ENCODE measurements at regions of chr19 and their contacts with region 1.

Region 1: DNA sequence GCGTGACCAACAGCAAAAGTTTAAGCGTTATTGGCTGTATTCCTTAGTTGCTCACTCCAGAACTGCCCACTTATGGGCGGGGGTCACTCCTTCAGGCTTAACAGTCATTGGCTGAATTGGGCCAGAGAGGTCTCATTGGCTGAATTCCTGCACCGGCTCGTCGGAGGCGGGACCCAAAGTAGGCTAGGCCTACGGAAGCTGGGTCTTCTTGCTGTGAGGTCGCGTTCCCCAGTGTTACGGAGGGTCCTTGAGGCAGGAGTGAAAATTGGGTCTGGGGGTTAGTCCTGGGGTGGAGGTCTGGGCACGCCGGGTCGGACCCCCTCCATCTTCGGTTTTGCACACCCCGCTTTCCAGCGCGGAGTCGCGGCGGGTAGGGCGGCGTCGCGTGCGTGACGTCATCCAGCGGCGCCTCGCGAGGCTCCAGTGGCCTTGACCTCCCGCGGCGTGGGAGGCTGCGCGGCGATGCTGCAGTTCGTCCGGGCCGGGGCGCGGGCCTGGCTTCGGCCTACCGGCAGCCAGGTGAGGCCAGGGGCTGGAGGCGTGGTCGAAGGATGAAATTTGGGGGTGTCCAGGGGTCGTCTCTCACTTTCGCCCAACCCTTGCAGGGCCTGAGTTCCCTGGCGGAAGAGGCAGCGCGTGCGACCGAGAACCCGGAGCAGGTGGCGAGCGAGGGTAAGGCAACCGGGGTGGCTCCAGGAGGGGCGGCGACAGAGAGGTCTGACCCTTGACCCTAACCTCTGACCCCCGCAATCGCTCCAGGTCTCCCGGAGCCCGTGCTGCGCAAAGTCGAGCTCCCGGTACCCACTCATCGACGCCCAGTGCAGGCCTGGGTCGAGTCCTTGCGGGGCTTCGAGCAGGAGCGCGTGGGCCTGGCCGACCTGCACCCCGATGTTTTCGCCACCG is at the start of gene MRPL4:
- DNase-seq: peak; percentile 93 to 99
- H3K4me3 ChIP-seq: peak within 1 kb of the TSS; percentile 68 to 94
- H3K27ac ChIP-seq: peak within 1 kb of the TSS; percentile 68 to 71
- H3K4me1 ChIP-seq: peaks cover 6 to 7% of the 10 kb centered on the region in 2 donors
- H3K27me3 ChIP-seq: no peaks in the 10 kb centered on the region
- CTCF ChIP-seq: no peak
- total RNA-seq, gene MRPL4: 72.9 TPM

Region 2: DNA sequence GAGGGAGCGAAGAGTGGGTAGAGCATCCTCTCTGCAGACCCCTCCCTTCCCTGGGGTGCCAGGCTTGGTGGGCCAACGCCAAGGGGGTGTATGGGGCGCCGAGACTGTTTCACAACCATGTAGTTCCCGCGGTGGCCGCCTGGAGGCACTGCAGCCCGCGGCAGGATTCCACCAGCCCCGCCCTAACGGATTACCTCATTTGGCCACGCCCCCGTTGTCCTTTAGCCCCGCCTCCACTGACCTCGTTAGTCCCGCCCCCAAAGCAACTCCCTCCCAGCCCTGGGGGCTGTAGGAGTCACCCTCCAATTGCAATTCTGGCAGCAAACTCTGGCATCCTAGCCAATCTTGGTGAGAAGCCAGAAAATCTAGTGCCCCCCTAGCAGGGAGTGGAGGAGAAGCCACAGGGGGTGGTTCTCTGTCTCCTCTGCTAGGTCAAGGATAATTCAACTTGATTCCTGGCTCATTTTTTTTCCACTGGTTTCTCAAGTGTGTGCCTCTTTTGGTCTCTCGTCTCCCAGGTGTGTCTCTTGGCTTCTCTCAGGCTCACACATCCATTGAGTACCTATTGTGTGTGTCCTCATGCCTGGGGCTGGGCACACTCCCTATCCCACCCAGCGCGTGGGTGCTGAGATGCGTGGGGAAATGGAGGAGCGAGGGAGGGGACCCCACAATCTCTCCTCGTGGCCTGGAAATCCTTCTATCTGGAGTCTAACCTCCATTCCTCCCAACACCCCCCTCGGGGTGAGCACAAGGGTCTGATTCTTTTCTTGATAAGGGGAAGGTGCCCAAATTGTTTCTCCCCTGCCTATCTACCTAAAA is 317.7 kb before region 1 on chr19:
- intact Hi-C with region 1: loop called (anchors 5 kb)
- DNase-seq: peak in 1 of 2 donors; percentile 77
- H3K4me3 ChIP-seq: no peak overlapping the region
- H3K27ac ChIP-seq: no peak overlapping the region
- H3K4me1 ChIP-seq: peaks cover 2 to 11% of the 10 kb centered on the region in 2 donors
- H3K27me3 ChIP-seq: peaks cover 9% of the 10 kb centered on the region
- CTCF ChIP-seq: peak; percentile 79 to 81 (median 79)

Region 3: DNA sequence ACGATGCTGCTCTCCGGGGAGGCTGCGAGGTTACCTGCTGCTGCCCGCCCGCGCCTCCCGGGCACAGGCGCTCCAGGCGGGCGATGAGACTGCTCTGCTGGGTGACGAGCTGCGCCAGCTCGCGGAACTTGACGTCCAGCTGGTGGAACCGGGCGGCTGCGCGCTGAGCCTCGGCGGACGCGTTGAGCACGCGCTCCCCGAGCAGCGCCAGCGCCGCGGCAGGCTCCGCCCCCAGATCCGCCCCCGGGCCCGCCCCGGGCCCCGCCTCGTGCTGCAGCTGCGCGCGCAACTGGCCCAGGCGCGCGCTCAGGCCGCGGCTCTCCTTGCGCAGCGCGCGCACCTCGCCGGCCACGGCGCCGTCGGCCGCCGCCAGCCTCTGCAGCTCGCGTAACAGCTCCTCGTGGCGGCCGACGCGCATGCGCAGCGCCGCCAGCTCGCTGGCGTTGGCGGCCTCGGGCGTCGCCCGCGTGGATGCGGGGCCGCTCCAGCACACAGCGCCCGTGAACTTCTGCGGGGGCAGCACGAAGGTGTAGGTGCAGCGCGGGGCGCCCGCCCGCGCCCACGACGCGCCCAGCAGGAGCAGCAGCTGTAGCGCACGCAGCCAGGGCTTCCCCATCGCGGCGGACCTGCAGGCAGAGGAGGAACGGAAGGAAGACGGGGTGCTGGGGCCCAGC is 156.0 kb before region 1 on chr19:
- intact Hi-C with region 1: loop called (anchors 5 kb)
- DNase-seq: peak; percentile 52 to 94
- H3K4me3 ChIP-seq: peak overlapping the region; percentile 55 to 73
- H3K27ac ChIP-seq: peak overlapping the region; percentile 67 to 69
- H3K4me1 ChIP-seq: peaks cover 4 to 8% of the 10 kb centered on the region in 2 donors
- H3K27me3 ChIP-seq: no peaks in the 10 kb centered on the region
- CTCF ChIP-seq: peak in 1 of 3 experiments; percentile 26

Region 4: DNA sequence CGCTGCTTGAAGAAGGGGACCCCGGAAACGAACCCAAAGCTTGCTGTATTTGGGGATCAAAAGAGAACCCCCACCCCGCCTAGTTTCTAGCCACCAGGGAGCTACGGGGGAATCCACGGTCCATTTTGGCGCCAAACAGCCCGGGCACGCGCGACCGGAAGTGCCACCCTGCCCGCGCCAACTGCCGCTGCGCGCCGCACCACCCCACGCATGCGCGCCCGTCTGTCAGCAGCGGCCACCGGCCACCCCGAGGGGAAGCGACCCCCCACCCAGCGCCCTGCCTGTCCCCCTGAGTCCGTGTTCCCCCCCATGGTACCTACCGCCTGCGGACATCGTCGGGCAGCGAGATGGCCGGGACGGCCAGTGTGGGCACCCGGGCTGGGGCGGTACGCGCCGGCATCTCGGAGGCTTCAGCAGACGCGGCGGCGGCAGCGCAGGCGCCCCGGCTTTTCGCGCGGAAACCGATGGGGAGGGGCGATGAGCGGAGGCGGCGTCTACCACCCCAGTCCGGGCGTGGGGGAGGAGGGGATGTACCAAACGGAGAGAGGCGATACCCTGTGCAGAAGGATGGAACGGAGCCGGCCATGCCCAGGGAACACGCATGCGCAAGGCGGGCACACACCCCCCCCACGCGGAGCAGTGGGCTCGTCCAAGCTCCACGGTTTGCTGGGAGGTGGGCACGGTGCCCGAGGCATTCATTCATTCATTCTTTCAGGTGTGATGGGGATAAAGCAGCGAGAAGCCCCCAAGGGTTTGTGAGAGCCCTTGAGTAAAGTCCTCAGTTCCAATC is 57.3 kb before region 1 on chr19 and contains the start of gene DNMT1:
- intact Hi-C with region 1: loop called (anchors 1 kb)
- DNase-seq: peak; percentile 75 to 96
- H3K4me3 ChIP-seq: peak within 1 kb of the TSS; percentile 81 to 97
- H3K27ac ChIP-seq: peak within 1 kb of the TSS; percentile 86 to 89
- H3K4me1 ChIP-seq: peaks cover 3 to 21% of the 10 kb centered on the region in 2 donors
- H3K27me3 ChIP-seq: no peaks in the 10 kb centered on the region
- CTCF ChIP-seq: no peak
- total RNA-seq, gene DNMT1: 54.0 TPM

Region 5: GRCh38 chr19:10305139-10305806 is 53.2 kb after region 1 on chr19:
- intact Hi-C with region 1: no loop called
- DNase-seq: no peak
- H3K4me3 ChIP-seq: no peak overlapping the region
- H3K27ac ChIP-seq: no peak overlapping the region
- H3K4me1 ChIP-seq: no peaks in the 10 kb centered on the region
- H3K27me3 ChIP-seq: no peaks in the 10 kb centered on the region
- CTCF ChIP-seq: no peak

Region 6: DNA sequence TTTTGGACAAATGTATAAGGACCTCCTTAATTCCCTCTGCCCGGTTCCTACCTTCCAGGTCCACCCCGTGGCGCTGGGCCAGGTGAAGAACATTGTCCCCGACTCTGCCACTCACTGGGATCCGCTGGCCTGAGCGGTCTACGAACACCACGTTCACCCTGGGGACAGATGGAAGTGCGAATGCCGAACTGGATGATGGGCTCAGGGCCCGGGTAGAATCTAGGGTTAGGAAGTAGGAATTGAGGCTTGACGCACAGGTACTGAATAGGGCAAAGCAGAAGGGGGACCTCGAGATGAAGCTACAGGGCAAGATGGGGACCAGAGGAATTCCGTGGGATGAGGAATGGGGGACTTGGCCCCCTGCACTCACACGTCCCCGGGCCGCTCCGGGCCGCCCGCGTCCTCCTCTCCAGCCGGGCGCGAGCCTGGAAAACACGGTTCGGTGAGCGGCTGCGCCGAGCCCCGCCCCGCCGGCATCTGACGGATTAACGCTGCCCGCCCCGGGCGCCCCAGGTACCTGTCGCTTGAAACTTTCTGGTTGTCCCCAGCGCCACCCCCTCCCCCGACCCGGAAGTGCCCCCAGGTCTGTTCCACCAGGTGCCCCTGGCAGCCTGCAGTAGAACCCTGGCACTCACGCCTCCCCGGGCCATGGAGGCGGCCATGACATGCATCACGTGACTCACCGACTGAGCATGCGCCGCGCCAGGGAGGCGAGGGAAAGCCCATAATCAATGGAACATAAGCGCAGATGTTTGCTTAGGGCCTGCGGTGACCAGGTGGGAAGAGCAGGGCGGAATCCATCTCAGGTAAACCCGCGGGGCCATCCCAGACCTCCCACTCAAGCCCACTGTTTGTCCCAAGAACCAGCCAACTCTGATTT is 63.5 kb after region 1 on chr19 and contains the start of gene FDX2:
- intact Hi-C with region 1: no loop called
- DNase-seq: peak in 1 of 2 donors; percentile 92
- H3K4me3 ChIP-seq: peak within 1 kb of the TSS; percentile 88 to 93
- H3K27ac ChIP-seq: no peak within 1 kb of the TSS
- H3K4me1 ChIP-seq: peaks cover 0 to 6% of the 10 kb centered on the region in 2 donors
- H3K27me3 ChIP-seq: no peaks in the 10 kb centered on the region
- CTCF ChIP-seq: peak in 1 of 3 experiments; percentile 4
- total RNA-seq, gene FDX2: 16.8 TPM

Region 7: DNA sequence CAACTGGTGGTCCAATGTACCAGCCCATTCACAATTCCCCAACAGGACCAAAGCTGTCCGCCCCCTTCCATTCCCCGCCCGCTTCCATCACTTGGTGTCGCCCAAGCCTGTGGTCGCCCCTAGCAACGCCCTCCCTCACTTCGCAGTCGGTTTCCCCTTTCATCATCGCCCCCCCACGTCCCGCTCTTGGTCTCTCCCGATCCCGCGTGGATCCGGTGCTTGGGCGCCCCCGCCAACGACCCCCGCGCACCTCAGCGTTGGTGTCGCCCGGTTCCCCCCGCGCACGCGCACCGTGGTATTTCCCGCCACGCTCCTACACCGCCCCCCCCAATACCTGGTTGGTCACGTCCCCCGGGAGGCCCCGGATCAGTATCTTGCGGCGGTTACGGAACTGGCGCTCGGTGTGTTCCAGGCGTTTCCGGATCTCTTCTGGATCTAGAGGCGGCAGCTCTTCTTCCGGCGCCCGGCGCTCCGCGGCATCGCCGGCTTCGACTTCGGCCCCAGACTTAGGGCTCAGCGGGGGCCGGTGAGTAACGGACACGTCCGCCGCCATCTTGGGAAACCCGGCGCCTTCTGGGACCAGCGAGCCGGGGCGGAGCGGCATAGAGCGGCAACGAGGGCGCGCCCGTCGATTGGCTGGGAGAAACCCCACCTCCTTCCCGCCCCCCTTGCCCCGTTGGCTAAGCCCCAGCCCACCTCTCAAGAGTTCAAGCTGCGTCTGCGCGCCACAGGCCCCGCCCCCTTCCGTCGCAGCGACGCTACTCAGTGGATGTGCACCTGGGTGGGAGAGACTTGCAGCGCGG is 81.1 kb after region 1 on chr19 and contains the start of gene RAVER1:
- intact Hi-C with region 1: loop called (anchors 5 kb)
- DNase-seq: peak; percentile 86 to 99
- H3K4me3 ChIP-seq: peak within 1 kb of the TSS; percentile 66 to 89
- H3K27ac ChIP-seq: peak within 1 kb of the TSS; percentile 87 to 94
- H3K4me1 ChIP-seq: peaks cover 4 to 12% of the 10 kb centered on the region in 2 donors
- H3K27me3 ChIP-seq: no peaks in the 10 kb centered on the region
- CTCF ChIP-seq: no peak
- total RNA-seq, gene RAVER1: 51.8 TPM